Endothelial cell of umbilical vein (primary cell): ENCODE measurements at regions of chr17 and their contacts with region 1.

Region 1: DNA sequence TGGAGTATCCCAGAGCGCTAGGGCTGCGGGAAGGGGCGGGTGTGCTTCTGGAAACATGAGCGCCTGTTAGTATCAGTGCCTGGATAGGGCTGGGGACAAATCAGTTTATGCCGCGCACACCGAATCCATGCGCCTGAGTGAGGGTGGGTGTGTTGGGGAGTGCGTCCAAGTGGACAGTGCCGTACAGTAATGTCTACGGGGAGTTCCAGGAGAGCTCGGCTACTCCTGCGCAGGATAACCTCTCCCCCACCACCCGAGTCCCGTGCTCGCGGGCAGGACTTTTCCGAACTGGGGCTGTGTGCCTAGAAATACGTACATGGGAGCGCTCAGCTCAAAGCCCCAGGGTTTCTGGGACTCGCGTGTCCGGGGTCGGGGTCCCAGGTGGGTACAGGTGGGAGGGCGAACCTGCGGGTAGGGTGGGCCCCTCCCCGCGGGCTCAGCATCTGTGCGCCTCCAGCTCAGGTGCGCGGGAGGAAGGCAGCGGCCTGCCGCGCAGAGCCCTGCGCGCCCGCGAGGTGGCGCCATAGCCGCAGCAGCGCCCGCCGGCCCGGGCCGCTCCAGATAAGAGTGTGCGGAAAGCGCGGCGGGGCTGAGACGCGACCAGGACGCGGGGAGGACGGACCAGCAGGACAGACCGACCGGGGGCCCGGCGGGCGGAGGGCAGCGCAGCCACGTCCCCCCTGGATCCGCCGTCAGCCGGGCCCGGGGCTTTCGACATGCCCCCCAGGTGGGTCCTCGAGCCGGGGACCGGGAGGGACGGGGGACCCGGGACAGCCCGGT is at the start of gene HIC1:
- DNase-seq: peak; percentile 75
- H3K4me3 ChIP-seq: peak within 1 kb of the TSS; percentile 61 to 74 (median 72)
- H3K27ac ChIP-seq: peak within 1 kb of the TSS; percentile 64
- H3K4me1 ChIP-seq: peaks cover 20% of the 10 kb centered on the region
- H3K27me3 ChIP-seq: peaks cover 2 to 11% of the 10 kb centered on the region in 2 experiments
- CTCF ChIP-seq: peak; percentile 75 to 94
- POLR2A ChIP-seq: peak; percentile 70
- total RNA-seq, gene HIC1: 25.8 and 35.5 TPM in 2 replicates

Region 2: GRCh38 chr17:2034806-2035540 is 19.7 kb before region 1 on chr17:
- CTCF ChIA-PET with region 1: no interaction called
- POLR2A ChIA-PET with region 1: no interaction called
- dilution Hi-C with region 1: no loop called
- intact Hi-C with region 1: no loop called
- DNase-seq: no peak
- H3K4me3 ChIP-seq: no peak overlapping the region
- H3K27ac ChIP-seq: no peak overlapping the region
- H3K4me1 ChIP-seq: peaks cover 4% of the 10 kb centered on the region
- H3K27me3 ChIP-seq: no peaks in the 10 kb centered on the region
- CTCF ChIP-seq: no peak
- POLR2A ChIP-seq: no peak

Region 3: DNA sequence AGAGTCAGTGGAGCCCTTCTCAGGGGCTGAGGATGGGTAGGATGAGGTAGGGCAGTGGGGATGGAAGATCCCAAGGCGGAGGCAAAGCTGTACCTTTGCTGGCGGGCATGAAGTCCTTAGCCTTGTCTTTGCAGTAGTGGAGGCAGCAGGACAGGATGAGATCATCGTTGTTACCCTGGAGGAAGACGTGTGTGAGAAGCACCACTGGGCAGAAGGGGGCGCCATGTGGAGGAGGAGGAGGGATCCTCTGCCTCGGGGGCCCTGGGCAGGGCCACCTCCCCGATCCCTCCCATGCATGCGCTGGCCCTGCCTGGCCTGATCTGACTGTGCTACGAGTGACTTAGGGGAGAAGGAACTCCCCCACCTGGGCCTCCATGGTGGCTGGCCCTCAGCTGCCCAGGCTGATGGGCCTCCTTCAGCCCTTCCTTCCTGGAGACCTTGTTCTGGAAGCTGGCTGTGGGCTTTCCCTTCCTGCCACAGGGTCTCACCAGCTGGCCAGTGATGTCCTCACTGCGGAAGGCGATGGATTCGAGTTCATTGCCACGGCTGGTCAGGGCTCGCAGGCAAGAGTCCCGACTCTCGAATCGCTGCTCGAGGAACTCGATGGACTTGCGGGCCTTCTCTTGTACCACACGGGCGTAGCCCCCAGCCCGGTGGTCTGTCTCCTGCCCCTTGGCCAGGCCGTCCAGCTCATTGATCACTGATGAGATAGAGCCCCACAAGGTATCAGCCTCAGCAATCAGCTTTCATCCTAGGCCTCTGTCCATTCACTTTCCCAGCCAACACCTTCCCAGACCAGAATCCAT is 10.5 kb after region 1 on chr17:
- CTCF ChIA-PET with region 1: interaction called, 27 read pairs
- POLR2A ChIA-PET with region 1: interaction called, 3 read pairs
- dilution Hi-C with region 1: no loop called
- intact Hi-C with region 1: no loop called
- DNase-seq: peak; percentile 79
- H3K4me3 ChIP-seq: no peak overlapping the region
- H3K27ac ChIP-seq: peak overlapping the region; percentile 78
- H3K4me1 ChIP-seq: peaks cover 53% of the 10 kb centered on the region
- H3K27me3 ChIP-seq: no peaks in the 10 kb centered on the region
- CTCF ChIP-seq: peak; percentile 66 to 70
- POLR2A ChIP-seq: no peak

Region 4: DNA sequence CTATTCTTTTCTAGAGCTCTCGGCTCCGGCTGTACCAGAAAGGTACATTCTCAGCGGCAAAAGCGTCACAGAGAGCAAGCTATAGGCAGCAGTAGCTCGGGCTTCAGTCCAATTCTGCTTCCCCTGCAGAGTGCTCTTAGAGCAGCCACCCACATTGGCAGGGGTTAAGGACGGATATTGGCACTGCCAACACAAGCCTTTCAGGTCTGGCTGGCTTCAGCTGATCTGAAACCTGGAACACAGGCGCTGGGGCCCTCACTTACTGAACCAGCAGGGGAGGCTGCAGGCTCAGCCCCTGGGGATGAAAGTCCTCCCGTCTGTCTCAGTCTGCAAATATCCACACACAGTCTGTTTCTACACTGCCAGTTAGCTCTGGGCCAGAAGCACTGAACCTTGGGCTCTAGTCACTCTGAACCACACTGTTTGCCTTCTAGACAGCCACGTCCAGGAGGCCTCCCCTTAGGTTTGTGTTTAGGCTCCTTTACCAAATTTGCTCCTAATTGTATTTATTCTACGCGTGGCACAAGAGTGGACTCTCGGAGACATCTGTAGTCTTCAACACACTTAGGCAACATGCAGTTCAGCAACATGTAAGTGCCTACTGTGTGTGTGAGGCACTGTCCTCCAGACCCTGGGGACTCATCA is 40.3 kb after region 1 on chr17:
- CTCF ChIA-PET with region 1: interaction called, 39 read pairs
- POLR2A ChIA-PET with region 1: no interaction called
- dilution Hi-C with region 1: no loop called
- intact Hi-C with region 1: no loop called
- DNase-seq: peak; percentile 78
- H3K4me3 ChIP-seq: no peak overlapping the region
- H3K27ac ChIP-seq: no peak overlapping the region
- H3K4me1 ChIP-seq: peaks cover 15% of the 10 kb centered on the region
- H3K27me3 ChIP-seq: no peaks in the 10 kb centered on the region
- CTCF ChIP-seq: peak; percentile 39 to 77
- POLR2A ChIP-seq: no peak

Region 5: DNA sequence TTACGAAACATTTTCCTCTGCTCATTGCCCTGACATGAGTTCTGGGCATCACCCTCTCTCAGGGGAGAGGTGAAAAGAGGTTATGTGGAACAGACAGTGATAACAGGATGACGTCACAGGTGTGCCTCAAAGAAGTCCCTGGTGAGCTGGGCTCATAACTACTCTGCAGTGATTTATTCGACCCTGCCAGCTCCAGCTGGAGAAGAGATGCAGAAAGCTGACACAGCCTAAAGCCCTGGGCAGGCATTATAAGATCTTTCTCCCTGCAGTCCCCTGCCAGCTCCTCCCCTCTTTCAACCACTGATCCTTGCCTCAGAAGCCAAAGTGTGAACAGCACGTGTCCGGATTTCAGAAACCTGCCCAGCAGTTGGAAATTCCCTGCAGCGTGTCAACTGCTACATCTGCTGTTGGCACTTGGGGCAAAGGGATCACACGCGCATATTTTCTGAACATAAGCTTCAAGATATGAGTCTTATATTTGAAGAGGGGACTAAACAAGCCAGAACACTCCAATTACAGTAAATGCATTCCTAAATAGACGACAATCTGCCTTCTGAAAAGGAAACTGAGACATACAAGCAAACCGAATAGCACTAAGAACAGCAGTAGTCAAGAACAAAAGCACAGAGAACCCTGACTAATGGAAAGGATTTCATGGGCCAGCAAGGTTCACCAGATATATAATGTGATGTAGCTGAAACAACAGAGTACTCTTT is 168.4 kb after region 1 on chr17:
- CTCF ChIA-PET with region 1: interaction called, 12 read pairs
- POLR2A ChIA-PET with region 1: no interaction called
- dilution Hi-C with region 1: no loop called
- intact Hi-C with region 1: no loop called
- DNase-seq: peak; percentile 66
- H3K4me3 ChIP-seq: no peak overlapping the region
- H3K27ac ChIP-seq: no peak overlapping the region
- H3K4me1 ChIP-seq: peaks cover 3% of the 10 kb centered on the region
- H3K27me3 ChIP-seq: no peaks in the 10 kb centered on the region
- CTCF ChIP-seq: no peak
- POLR2A ChIP-seq: no peak

Region 6: DNA sequence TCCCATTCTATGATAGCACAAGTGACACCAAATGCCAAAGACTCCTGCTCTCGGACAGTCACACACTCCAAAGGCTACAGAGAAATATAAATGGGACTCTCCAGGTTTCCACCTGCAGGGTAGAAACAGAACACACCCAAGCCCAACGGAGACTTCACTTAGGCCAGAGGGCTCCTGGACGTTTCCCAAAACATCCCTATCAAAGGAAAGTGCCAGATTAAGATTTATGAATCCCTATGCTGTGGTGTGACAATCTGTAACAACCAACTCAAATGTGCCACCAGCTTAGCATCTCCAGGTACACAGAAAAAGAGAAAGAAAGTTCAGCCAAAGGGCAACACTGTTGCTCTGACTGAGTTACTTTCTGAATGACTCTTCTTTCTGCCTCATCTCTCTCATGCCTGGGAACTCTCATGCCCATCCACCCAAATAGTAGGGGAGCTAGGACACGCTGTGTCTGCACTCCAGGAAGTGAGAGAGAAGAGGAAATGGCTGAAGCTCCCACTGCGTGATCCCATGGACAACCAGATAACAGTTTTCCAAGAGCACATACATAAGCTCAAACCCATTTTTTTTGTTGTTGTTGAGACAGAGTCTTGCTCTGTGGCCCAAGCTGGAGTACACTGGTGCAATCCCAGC is 199.2 kb after region 1 on chr17:
- CTCF ChIA-PET with region 1: interaction called, 15 read pairs
- POLR2A ChIA-PET with region 1: no interaction called
- dilution Hi-C with region 1: no loop called
- intact Hi-C with region 1: no loop called
- DNase-seq: no peak
- H3K4me3 ChIP-seq: no peak overlapping the region
- H3K27ac ChIP-seq: no peak overlapping the region
- H3K4me1 ChIP-seq: no peaks in the 10 kb centered on the region
- H3K27me3 ChIP-seq: no peaks in the 10 kb centered on the region
- CTCF ChIP-seq: no peak
- POLR2A ChIP-seq: no peak

Region 7: GRCh38 chr17:2336215-2336851 is 281.6 kb after region 1 on chr17 and contains the start of gene TSR1:
- CTCF ChIA-PET with region 1: interaction called, 6 read pairs
- POLR2A ChIA-PET with region 1: no interaction called
- dilution Hi-C with region 1: no loop called
- intact Hi-C with region 1: loop called (anchors 5 kb)
- DNase-seq: peak; percentile 92
- H3K4me3 ChIP-seq: peak within 1 kb of the TSS; percentile 56 to 85 (median 72)
- H3K27ac ChIP-seq: peak within 1 kb of the TSS; percentile 26
- H3K4me1 ChIP-seq: peaks cover 16% of the 10 kb centered on the region
- H3K27me3 ChIP-seq: no peaks in the 10 kb centered on the region
- CTCF ChIP-seq: peak in 1 of 2 donors; percentile 30
- POLR2A ChIP-seq: peak; percentile 95
- total RNA-seq, gene TSR1: 35.0 and 39.9 TPM in 2 replicates

Region 8: DNA sequence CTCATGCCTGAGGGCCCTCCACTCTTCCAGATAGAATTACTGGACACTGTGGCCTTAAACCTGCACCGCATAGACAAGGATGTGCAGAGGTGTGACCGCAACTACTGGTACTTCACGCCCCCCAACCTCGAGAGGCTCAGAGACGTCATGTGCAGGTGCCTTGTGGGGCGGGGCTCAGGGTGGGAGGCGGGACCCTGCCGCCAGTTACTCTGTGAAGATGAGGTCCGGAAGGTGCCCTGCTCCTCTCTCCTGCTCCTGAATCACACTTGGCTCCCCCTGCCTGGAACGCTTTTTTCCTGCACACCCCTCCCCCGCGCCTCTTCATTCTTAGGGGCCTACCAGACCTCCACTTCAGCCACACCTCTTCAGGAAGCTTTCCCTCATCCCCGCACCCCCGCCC is 321.4 kb after region 1 on chr17:
- CTCF ChIA-PET with region 1: no interaction called
- POLR2A ChIA-PET with region 1: no interaction called
- dilution Hi-C with region 1: no loop called
- intact Hi-C with region 1: no loop called
- DNase-seq: no peak
- H3K4me3 ChIP-seq: no peak overlapping the region
- H3K27ac ChIP-seq: no peak overlapping the region
- H3K4me1 ChIP-seq: no peaks in the 10 kb centered on the region
- H3K27me3 ChIP-seq: no peaks in the 10 kb centered on the region
- CTCF ChIP-seq: no peak
- POLR2A ChIP-seq: no peak